ENCODE measurements at regions of chr2 and their contacts with region 1.

Region 1: DNA sequence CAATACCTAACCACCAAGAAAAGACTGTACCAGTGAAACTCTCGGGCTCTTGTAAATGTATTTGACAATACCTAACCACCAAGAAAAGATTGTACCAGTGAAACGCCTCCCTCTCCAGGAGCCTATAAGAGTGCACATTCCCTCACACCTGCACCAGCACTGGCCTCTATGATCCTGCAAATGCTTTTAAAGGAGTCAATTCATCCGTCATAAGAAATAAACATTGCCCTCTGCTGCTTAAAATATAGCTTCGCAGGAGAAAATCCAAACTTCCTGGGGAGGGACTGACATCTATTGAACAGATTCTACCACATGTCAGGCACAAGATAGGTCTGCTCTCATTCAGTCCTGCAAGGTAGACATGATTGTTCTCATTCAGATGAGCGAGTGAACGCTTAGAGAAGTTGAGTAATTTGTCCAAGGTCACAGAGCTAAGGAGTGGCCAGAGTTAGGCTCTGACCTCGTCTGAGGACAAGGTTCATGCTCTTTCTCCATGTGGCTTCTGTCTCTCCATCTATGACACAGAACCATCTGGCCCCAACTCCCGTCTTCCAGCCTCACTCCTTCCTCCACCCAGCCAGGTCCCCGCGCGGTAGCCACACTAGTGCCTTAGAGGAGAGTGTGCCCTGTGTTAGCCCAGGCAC is 38.7 kb downstream of the MCFD2 start:
- DNase-seq: no peak
- H3K4me3 ChIP-seq: no peak overlapping the region
- H3K27ac ChIP-seq: peak overlapping the region in 3 of 4 donors; percentile 32 to 55 (median 52)
- H3K4me1 ChIP-seq: peaks cover 46 to 74% (median 70%) of the 10 kb centered on the region in 4 donors
- H3K27me3 ChIP-seq: no peaks in the 10 kb centered on the region
- CTCF ChIP-seq: peak; percentile 62 to 75 (median 65)
- EP300 ChIP-seq: no peak
- POLR2A ChIP-seq: no peak

Region 2: GRCh38 chr2:46812361-46813024 is 64.4 kb before region 1 on chr2:
- intact Hi-C with region 1: loop called (anchors 5 kb)
- DNase-seq: peak; percentile 93
- H3K4me3 ChIP-seq: peak overlapping the region in 3 of 4 donors; percentile 14 to 27 (median 21)
- H3K27ac ChIP-seq: peak overlapping the region; percentile 80 to 89 (median 82)
- H3K4me1 ChIP-seq: peaks cover 58 to 66% (median 66%) of the 10 kb centered on the region in 4 donors
- H3K27me3 ChIP-seq: no peaks in the 10 kb centered on the region
- CTCF ChIP-seq: no peak
- EP300 ChIP-seq: peak; percentile 1
- POLR2A ChIP-seq: no peak

Region 3: GRCh38 chr2:46827632-46828438 is 49.0 kb before region 1 on chr2:
- intact Hi-C with region 1: no loop called
- DNase-seq: no peak
- H3K4me3 ChIP-seq: no peak overlapping the region
- H3K27ac ChIP-seq: no peak overlapping the region
- H3K4me1 ChIP-seq: peaks cover 0 to 14% (median 2%) of the 10 kb centered on the region in 4 donors
- H3K27me3 ChIP-seq: no peaks in the 10 kb centered on the region
- CTCF ChIP-seq: no peak
- EP300 ChIP-seq: no peak
- POLR2A ChIP-seq: no peak